Mammary epithelial cell (primary cell): ENCODE measurements at regions of chr7 and their contacts with region 1.

Region 1: DNA sequence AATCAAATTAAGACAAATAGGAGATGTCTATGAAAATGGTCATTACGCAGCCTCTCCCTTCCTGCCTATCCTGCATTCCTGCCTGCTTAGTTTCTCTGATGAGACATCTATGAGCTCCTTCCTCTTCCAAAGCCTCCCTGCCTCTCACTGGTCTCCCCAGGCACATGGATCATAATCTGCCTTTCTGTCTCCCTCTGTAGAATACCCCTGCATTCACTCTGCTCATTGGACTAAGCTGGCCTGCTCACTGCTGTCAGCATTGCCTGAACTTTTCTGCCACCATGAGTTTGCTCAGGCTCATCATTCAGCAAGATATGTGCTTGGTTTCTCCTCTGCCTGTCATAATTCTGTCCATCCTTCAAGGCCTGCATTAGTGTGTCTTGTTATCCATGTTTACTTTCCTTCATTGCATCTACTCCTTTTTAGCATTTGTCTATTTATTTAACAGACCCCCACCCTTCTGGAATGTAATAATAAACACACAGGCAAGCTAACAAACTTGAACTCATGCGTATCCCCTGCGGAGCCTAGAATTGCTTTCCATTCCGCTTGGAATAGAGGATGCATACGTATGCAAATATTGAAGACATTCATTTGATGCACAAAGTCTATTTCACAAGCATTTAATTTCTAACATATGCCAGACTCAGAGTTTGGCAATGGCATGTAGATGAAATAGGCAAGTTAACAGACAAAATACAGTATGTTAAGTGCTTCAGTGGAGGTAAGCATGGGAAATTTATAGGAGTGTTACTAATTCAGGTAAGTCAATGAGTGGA is 88.3 kb downstream of the PTPRZ1 start:
- DNase-seq: peak; percentile 93
- H3K4me3 ChIP-seq: no peak overlapping the region
- H3K27ac ChIP-seq: peak overlapping the region; percentile 99
- H3K4me1 ChIP-seq: peaks cover 10% of the 10 kb centered on the region
- H3K27me3 ChIP-seq: no peaks in the 10 kb centered on the region
- CTCF ChIP-seq: peak; percentile 25 to 47

Region 2: GRCh38 chr7:121605317-121605680 is 356.0 kb before region 1 on chr7:
- CTCF ChIA-PET with region 1: interaction called, 8 read pairs
- dilution Hi-C with region 1: no loop called
- in situ Hi-C with region 1: no loop called
- intact Hi-C with region 1: loop called (anchors 1 kb)
- DNase-seq: peak; percentile 46
- H3K4me3 ChIP-seq: no peak overlapping the region
- H3K27ac ChIP-seq: no peak overlapping the region
- H3K4me1 ChIP-seq: peaks cover 12% of the 10 kb centered on the region
- H3K27me3 ChIP-seq: no peaks in the 10 kb centered on the region
- CTCF ChIP-seq: peak; percentile 32 to 68

Region 3: GRCh38 chr7:121744319-121744718 is 217.0 kb before region 1 on chr7:
- CTCF ChIA-PET with region 1: interaction called, 3 read pairs
- dilution Hi-C with region 1: no loop called
- in situ Hi-C with region 1: no loop called
- intact Hi-C with region 1: loop called (anchors 2 kb)
- DNase-seq: peak; percentile 91
- H3K4me3 ChIP-seq: no peak overlapping the region
- H3K27ac ChIP-seq: peak overlapping the region; percentile 94
- H3K4me1 ChIP-seq: peaks cover 44% of the 10 kb centered on the region
- H3K27me3 ChIP-seq: no peaks in the 10 kb centered on the region
- CTCF ChIP-seq: no peak

Region 4: GRCh38 chr7:121797657-121798452 is 163.4 kb before region 1 on chr7:
- CTCF ChIA-PET with region 1: interaction called, 6 read pairs
- dilution Hi-C with region 1: no loop called
- in situ Hi-C with region 1: no loop called
- intact Hi-C with region 1: loop called (anchors 1 kb)
- DNase-seq: peak; percentile 86
- H3K4me3 ChIP-seq: peak overlapping the region in 1 of 3 experiments; percentile 6
- H3K27ac ChIP-seq: peak overlapping the region; percentile 96
- H3K4me1 ChIP-seq: peaks cover 64% of the 10 kb centered on the region
- H3K27me3 ChIP-seq: no peaks in the 10 kb centered on the region
- CTCF ChIP-seq: no peak

Region 5: DNA sequence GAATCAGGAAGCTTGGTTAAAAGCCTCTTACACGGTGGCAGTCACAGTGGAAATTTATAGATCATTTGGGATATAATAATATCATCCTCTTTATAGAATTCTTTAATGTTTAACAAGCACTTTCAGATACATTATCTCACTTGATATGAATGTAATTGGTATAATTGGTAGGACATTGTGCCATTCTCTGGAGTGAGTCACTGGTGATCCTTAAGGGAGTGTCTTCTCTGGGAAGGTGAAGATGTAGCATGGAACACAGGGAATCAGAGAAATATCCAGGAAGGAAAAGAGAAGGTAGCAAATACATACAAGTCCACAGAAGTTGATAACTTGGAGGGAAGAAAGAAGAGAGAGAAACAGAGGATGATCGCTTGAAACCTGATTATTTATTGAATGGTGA is 78.5 kb before region 1 on chr7:
- CTCF ChIA-PET with region 1: interaction called, 4 read pairs
- dilution Hi-C with region 1: no loop called
- in situ Hi-C with region 1: no loop called
- intact Hi-C with region 1: loop called (anchors 2 kb)
- DNase-seq: peak; percentile 37
- H3K4me3 ChIP-seq: no peak overlapping the region
- H3K27ac ChIP-seq: no peak overlapping the region
- H3K4me1 ChIP-seq: peaks cover 12% of the 10 kb centered on the region
- H3K27me3 ChIP-seq: no peaks in the 10 kb centered on the region
- CTCF ChIP-seq: no peak